GM23248 (cell line): ENCODE measurements at regions of chr18 and their contacts with region 1.

Region 1: GRCh38 chr18:31801078-31801477 is 40.4 kb upstream of the SLC25A52 start:
- DNase-seq: no peak
- H3K4me3 ChIP-seq: no peak overlapping the region
- H3K27ac ChIP-seq: no peak overlapping the region
- H3K4me1 ChIP-seq: no peaks in the 10 kb centered on the region
- H3K27me3 ChIP-seq: 0 out of 2 replicates have a peak, but pooled peaks cover 5% of the 10 kb centered on the region

Region 2: DNA sequence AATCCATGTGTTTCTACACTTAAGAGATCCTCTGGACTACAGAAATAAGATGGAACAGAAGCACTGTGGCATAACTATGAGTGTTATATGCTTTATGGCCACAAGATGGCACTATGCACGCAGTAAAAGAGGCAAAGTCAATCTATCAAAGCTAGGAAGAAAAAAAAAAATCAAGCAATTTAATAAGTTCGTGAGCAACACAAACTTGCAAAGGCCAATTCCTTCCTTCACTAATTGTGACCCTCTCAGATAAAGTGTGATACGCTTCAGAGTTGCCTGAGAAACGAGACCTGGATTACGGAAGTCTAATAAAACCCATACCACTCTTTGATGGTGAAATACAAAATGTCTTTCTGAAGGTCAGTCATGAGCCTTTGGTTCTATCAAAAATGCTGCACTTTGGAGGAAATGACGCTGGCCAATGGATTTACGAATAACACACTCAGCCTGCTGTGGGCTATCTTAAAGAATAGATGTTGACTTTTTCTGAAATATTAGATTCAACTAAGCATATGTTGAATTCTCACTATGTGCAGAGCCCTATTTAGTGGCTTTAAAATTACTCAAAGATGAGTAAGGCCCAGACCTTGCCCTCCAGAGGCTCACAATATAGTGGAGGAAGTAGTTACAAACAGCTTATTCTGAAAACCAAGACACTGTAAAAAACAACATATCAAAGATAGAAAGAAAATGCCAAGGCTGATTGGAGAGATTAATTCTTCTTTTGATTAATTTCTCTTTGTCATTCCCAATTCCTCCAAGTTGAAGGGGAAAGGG is 244.9 kb before region 1 on chr18:
- in situ Hi-C with region 1: loop called (anchors 10 kb)
- DNase-seq: peak; percentile 67
- H3K4me3 ChIP-seq: no peak overlapping the region
- H3K27ac ChIP-seq: no peak overlapping the region
- H3K4me1 ChIP-seq: no peaks in the 10 kb centered on the region
- H3K27me3 ChIP-seq: peaks cover 3% of the 10 kb centered on the region; the same call in 1 of the 2 replicates

Region 3: GRCh38 chr18:31750273-31750672 is 50.8 kb before region 1 on chr18:
- in situ Hi-C with region 1: no loop called
- DNase-seq: no peak
- H3K4me3 ChIP-seq: no peak overlapping the region
- H3K27ac ChIP-seq: no peak overlapping the region
- H3K4me1 ChIP-seq: no peaks in the 10 kb centered on the region
- H3K27me3 ChIP-seq: no peaks in the 10 kb centered on the region

Region 4: GRCh38 chr18:32104530-32104929 is 303.5 kb after region 1 on chr18:
- in situ Hi-C with region 1: no loop called
- DNase-seq: no peak
- H3K4me3 ChIP-seq: no peak overlapping the region
- H3K27ac ChIP-seq: no peak overlapping the region
- H3K4me1 ChIP-seq: no peaks in the 10 kb centered on the region
- H3K27me3 ChIP-seq: no peaks in the 10 kb centered on the region